ENCODE measurements at regions of chr9 and their contacts with region 1.

Region 1: GRCh38 chr9:5450359-5451091 is at the start of gene CD274:
- DNase-seq: peak; percentile 96
- total RNA-seq, gene CD274: 17.9 TPM

Region 2: GRCh38 chr9:5336688-5337087 is 113.8 kb before region 1 on chr9:
- intact Hi-C with region 1: no loop called
- DNase-seq: no peak

Region 3: DNA sequence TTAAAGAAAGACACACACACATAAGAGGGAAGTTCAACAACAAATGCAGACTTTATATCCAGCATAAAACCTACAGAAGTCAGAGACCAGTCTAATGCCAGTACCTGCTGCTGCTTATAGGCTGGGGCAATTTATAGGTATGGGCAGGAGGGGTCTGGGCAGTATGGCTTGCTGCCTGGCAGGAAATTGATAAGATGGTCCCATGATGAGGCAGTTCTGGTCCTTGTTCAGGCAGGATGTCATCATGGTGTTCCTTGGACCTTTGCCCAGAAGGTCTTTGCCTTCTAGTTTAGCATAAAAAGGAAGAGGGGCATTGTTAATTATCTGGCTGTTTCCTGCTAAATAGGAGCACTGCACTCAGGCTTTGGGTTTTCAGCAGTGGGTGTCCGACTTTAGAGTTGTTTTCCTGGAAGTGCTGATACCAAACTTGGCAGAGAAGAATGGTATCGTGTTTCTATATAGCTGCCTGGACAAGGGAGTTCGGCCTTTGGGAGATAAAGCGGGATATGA is 49.4 kb after region 1 on chr9:
- intact Hi-C with region 1: loop called (anchors 5 kb)
- DNase-seq: no peak

Region 4: DNA sequence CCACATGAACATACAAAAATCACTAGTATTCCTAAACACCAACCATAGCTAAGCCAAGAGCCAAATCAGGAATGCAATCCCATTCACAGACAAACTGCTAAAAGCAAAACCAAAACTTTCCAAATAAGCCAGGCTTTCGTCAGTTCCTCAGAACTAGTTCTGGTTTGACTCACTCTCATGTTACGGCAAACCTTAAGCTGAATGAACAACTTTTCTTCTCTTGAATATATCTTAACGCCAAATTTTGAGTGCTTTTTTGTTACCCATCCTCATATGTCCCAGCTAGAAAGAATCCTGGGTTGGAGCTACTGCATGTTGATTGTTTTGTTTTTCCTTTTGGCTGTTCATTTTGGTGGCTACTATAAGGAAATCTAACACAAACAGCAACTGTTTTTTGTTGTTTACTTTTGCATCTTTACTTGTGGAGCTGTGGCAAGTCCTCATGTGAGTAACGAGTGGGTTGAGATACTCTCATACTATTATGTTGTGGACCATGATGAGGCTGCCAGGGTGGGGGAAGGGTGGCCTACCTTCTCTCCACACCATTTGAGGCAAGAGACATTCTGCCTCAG is 59.9 kb after region 1 on chr9 and contains the start of gene PDCD1LG2:
- intact Hi-C with region 1: no loop called
- DNase-seq: no peak
- total RNA-seq, gene PDCD1LG2: 0.48 TPM

Region 5: DNA sequence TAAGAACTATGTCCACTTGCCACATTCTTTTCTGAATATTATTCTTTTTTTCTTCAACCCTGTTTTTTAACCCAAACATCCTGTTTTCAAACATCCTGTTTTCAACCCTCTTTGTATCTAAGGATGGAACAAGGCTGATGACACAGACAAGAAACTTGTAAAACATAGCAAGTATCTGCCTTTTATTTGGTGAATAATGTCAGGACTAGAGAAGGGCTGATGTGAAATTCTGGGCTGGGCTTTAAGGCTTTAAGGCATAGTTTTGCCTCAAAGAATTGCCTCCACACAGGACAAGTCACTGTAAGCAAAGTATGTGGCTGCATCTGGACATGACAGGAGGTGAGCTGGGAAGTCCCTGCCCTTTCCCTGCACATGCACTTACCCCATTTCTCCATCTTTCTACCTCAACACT is 135.9 kb after region 1 on chr9:
- intact Hi-C with region 1: loop called (anchors 2 kb)
- DNase-seq: no peak